B cell (primary cell): ENCODE measurements at regions of chr2 and their contacts with region 1.

Region 1: GRCh38 chr2:237512774-237513466 is 25.9 kb downstream of the MLPH start:
- DNase-seq: peak; percentile 84
- ATAC-seq: peak; percentile 86
- H3K4me3 ChIP-seq: no peak overlapping the region
- H3K4me3 Mint-ChIP-seq: no peak overlapping the region
- H3K27ac ChIP-seq: no peak overlapping the region
- H3K27ac Mint-ChIP-seq: no peak overlapping the region
- H3K4me1 ChIP-seq: no peaks in the 10 kb centered on the region
- H3K4me1 Mint-ChIP-seq: no peaks in the 10 kb centered on the region
- H3K27me3 ChIP-seq: peaks cover 0 to 7% (median 3%) of the 10 kb centered on the region in 4 experiments
- H3K27me3 Mint-ChIP-seq: peaks cover 13% of the 10 kb centered on the region
- CTCF ChIP-seq: peak; percentile 91

Region 2: DNA sequence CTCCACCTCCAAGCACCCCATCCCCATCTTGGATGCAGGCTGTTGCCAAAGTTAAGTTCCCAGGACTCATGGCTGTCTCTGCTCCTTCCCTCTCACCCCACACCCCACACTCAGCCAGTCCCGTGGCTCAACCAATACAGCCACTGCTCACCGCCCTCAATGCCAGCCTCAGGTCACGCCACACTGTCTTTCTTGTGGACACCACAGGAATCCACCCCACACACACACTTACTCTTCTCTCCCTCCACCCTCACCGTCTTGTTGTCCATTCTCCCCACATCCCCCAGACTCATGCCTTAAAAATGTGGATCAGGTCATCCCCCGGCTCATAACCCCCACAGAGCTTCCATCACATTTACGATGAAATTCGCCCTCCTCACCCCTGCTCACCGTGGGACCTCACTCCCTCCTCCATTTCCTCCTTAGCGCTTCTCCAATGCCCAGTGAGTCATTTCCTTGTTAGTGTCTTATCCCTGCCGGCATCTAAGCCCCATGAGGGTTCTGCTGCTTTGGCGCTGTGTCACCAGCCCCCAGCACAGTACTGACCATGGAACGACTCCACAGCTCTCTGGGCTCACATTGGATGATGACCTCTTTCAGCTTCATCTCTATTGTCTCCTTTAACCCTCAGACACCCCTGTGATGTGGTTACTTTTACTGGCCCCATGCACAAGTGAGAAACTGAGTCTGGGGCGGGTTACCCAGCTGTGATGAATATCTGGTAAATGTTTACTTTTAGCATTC is 12.1 kb before region 1 on chr2:
- CTCF ChIA-PET with region 1: interaction called, 15 read pairs
- POLR2A ChIA-PET with region 1: no interaction called
- intact Hi-C with region 1: no loop called
- DNase-seq: no peak
- ATAC-seq: no peak
- H3K4me3 ChIP-seq: no peak overlapping the region
- H3K4me3 Mint-ChIP-seq: no peak overlapping the region
- H3K27ac ChIP-seq: no peak overlapping the region
- H3K27ac Mint-ChIP-seq: peak overlapping the region; percentile 11
- H3K4me1 ChIP-seq: no peaks in the 10 kb centered on the region
- H3K4me1 Mint-ChIP-seq: no peaks in the 10 kb centered on the region
- H3K27me3 ChIP-seq: peaks cover 0 to 9% (median 0%) of the 10 kb centered on the region in 4 experiments
- H3K27me3 Mint-ChIP-seq: peaks cover 36% of the 10 kb centered on the region
- CTCF ChIP-seq: no peak

Region 3: GRCh38 chr2:237563816-237564215 is 50.9 kb after region 1 on chr2:
- CTCF ChIA-PET with region 1: interaction called, 10 read pairs
- POLR2A ChIA-PET with region 1: no interaction called
- intact Hi-C with region 1: no loop called
- DNase-seq: no peak
- ATAC-seq: no peak
- H3K4me3 ChIP-seq: no peak overlapping the region
- H3K4me3 Mint-ChIP-seq: no peak overlapping the region
- H3K27ac ChIP-seq: no peak overlapping the region
- H3K27ac Mint-ChIP-seq: no peak overlapping the region
- H3K4me1 ChIP-seq: no peaks in the 10 kb centered on the region
- H3K4me1 Mint-ChIP-seq: no peaks in the 10 kb centered on the region
- H3K27me3 ChIP-seq: peaks cover 0 to 8% (median 0%) of the 10 kb centered on the region in 4 experiments
- H3K27me3 Mint-ChIP-seq: peaks cover 20% of the 10 kb centered on the region
- CTCF ChIP-seq: no peak

Region 4: DNA sequence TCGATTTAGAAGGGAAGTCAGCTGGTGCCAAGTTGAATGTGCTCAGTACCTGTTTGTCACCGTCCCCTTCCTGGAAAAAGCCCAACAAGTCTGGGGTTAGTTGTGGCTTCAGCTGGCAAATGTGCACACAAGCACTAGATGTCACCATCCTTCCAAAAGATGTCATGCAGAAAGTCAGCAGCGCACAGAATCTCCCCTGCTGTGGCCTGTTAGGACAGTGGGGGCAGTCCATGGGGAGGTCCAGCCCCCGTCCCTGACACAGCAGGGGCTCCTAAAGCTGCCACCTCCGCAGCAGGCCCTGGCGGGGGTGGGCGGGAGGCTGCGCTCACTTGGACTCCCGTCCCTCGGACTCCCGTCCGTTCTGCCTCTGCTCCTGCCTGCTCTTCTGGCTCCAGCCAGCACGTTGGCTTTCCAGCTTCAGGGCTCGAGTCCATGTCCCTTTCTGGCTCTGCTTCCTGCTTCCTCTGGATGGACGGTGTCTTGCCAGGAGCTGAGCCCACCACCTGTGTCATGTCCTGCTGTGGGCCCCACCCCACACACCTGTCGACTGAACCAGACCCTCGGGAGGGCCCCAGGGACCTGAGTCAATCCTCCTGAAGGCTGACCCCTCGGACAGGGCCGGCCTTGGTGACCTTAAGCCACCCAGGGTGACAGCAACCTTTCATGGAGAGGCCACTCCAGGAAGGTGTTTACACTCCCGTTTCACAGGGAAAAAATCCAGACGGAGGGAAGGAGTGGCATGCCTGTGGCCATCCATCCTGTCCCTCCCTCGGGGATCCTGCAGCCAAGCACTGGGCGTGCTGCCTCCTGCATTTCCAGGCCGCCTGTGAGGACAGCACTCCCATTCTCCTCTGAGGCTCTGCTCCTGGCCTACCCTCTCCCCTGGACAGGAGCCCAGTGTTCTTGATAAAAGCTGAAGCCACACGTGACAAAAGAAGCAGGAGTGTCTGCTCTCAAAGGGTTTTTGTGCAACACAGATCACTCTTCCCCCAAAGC is 69.1 kb after region 1 on chr2:
- CTCF ChIA-PET with region 1: interaction called, 11 read pairs
- POLR2A ChIA-PET with region 1: interaction called, 3 read pairs
- intact Hi-C with region 1: no loop called
- DNase-seq: peak; percentile 61
- ATAC-seq: peak; percentile 68
- H3K4me3 ChIP-seq: no peak overlapping the region
- H3K4me3 Mint-ChIP-seq: no peak overlapping the region
- H3K27ac ChIP-seq: no peak overlapping the region
- H3K27ac Mint-ChIP-seq: no peak overlapping the region
- H3K4me1 ChIP-seq: peaks cover 0 to 4% of the 10 kb centered on the region in 2 donors
- H3K4me1 Mint-ChIP-seq: peaks cover 2% of the 10 kb centered on the region
- H3K27me3 ChIP-seq: peaks cover 0 to 7% (median 0%) of the 10 kb centered on the region in 4 experiments
- H3K27me3 Mint-ChIP-seq: peaks cover 2% of the 10 kb centered on the region
- CTCF ChIP-seq: peak; percentile 45

Region 5: GRCh38 chr2:237923481-237924163 is 410.7 kb after region 1 on chr2:
- CTCF ChIA-PET with region 1: no interaction called
- POLR2A ChIA-PET with region 1: no interaction called
- intact Hi-C with region 1: no loop called
- DNase-seq: peak; percentile 83
- ATAC-seq: peak; percentile 99
- H3K4me3 ChIP-seq: peak overlapping the region in 3 of 5 experiments; percentile 15 to 41 (median 30)
- H3K4me3 Mint-ChIP-seq: peak overlapping the region; percentile 65
- H3K27ac ChIP-seq: no peak overlapping the region
- H3K27ac Mint-ChIP-seq: peak overlapping the region; percentile 15
- H3K4me1 ChIP-seq: peaks cover 0 to 5% of the 10 kb centered on the region in 2 donors
- H3K4me1 Mint-ChIP-seq: peaks cover 18% of the 10 kb centered on the region
- H3K27me3 ChIP-seq: peaks cover 0 to 8% (median 0%) of the 10 kb centered on the region in 4 experiments
- H3K27me3 Mint-ChIP-seq: no peaks in the 10 kb centered on the region
- CTCF ChIP-seq: peak; percentile 99

Region 6: DNA sequence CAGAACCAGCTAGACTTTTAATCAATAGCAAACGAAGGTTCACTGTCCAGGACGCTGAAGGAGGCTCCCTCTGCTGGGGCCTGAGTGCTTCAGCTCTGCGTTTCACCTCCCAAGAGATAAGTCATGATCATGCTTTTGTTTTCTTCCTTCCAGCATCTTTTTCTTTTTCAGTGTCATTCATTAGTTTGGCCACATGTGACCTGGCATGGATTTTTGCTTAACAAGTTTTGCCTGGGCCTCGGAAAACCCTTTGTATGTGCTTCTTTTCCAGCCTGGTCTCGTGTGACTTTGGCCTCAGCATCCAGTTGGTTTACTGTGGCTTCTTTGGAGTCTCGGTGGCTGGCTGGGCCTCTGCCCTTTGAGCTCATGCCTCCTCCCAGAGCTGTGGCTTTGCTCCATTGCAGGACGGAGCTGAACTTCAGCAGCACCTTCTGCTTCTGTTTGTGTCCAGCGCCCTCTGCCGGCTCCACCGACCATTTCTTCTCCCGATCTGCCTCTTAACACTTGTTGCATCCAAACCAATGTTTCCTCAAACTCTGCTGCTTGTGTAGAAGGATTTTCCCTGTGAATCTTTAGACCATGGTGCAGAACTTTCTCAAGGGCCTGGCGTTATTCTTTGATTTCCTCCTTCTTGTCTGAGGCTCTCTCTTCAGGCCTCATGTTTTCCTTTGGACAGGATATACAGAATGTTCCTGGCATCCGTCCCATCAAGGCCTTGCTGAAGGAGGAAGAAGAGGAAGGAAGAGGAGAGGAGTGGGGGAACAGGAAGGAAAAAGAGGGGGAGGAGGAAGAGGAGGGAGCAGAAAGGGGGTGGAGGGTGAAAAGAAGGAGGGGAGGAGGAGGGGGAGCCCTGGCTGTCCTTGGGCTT is 750.5 kb after region 1 on chr2:
- CTCF ChIA-PET with region 1: interaction called, 23 read pairs
- POLR2A ChIA-PET with region 1: no interaction called
- intact Hi-C with region 1: loop called (anchors 1 kb)
- DNase-seq: peak; percentile 78
- ATAC-seq: peak; percentile 66
- H3K4me3 ChIP-seq: no peak overlapping the region
- H3K4me3 Mint-ChIP-seq: no peak overlapping the region
- H3K27ac ChIP-seq: no peak overlapping the region
- H3K27ac Mint-ChIP-seq: no peak overlapping the region
- H3K4me1 ChIP-seq: peaks cover 0 to 4% of the 10 kb centered on the region in 2 donors
- H3K4me1 Mint-ChIP-seq: peaks cover 1% of the 10 kb centered on the region
- H3K27me3 ChIP-seq: no peaks in the 10 kb centered on the region
- H3K27me3 Mint-ChIP-seq: no peaks in the 10 kb centered on the region
- CTCF ChIP-seq: peak; percentile 84